Activated T-helper 1 cell treated with anti-CD3 and anti-CD28 coated beads, Interleukin-12 subunit alpha, Interleukin-12 subunit beta, Interleukin-2, Interleukin-4 antibody, amounts not matched to agents 30 ng/mL and 10 ng/mL and 1 ng/mL, durations not matched to agents 14 hours and 24 hours and 36 hours (primary cell): ENCODE measurements at regions of chr4 and their contacts with region 1.

Region 1: GRCh38 chr4:140153718-140154571 is at the start of gene MAML3:
- DNase-seq: peak; percentile 76
- H3K4me3 Mint-ChIP-seq: peak within 1 kb of the TSS; percentile 86
- H3K27ac Mint-ChIP-seq: peak within 1 kb of the TSS; percentile 63
- H3K4me1 Mint-ChIP-seq: peaks cover 57% of the 10 kb centered on the region
- H3K27me3 Mint-ChIP-seq: peaks cover 69% of the 10 kb centered on the region
- total RNA-seq, gene MAML3: 0.32 and 0.47 TPM in 2 replicates

Region 2: DNA sequence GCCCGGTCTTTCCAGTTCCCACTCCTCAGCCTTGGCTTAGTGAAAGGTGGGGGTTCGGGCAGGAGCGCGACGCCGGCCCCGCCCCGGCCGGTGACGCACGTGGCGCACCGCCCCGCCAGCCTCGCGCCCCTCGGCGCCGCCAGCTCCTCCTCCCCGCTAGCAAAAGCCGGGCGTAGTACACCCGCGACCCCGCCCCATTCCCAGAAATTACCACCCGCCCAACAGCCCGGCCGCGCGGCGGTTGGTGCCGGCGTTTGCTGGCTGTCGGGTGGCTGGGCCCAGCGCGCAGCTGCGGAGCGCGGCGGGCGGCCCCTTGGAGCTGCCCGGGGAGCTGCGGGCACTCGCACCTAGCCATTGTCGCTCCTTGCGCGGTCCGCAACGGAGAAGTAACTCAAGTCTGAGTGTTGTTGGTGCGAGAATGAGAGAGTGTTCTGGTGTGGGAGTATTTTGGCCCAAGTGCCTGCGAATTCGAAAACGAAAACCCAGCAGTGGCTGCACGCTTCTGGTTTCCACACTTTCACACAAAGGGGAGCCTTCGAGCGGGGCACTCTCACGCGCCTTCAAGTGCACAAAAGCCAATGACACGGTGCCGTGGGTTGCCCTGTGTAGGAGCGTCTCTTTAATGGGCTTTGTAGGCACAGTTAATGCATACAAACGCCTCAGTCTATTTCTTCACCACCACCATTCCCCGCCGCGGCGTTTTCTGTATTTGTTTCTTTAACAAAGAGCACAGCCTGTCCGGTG is 975.9 kb before region 1 on chr4:
- intact Hi-C with region 1: loop called (anchors 2 kb)
- DNase-seq: peak; percentile 97
- H3K4me3 Mint-ChIP-seq: peak overlapping the region; percentile 86
- H3K27ac Mint-ChIP-seq: peak overlapping the region; percentile 91
- H3K4me1 Mint-ChIP-seq: peaks cover 36% of the 10 kb centered on the region
- H3K27me3 Mint-ChIP-seq: peaks cover 50% of the 10 kb centered on the region

Region 3: GRCh38 chr4:139656614-139657486 is 497.1 kb before region 1 on chr4:
- intact Hi-C with region 1: loop called (anchors 2 kb)
- DNase-seq: peak; percentile 42
- H3K4me3 Mint-ChIP-seq: peak overlapping the region; percentile 73
- H3K27ac Mint-ChIP-seq: peak overlapping the region; percentile 94
- H3K4me1 Mint-ChIP-seq: peaks cover 45% of the 10 kb centered on the region
- H3K27me3 Mint-ChIP-seq: no peaks in the 10 kb centered on the region

Region 4: GRCh38 chr4:140012688-140013486 is 141.1 kb before region 1 on chr4:
- intact Hi-C with region 1: loop called (anchors 2 kb)
- DNase-seq: peak; percentile 42
- H3K4me3 Mint-ChIP-seq: no peak overlapping the region
- H3K27ac Mint-ChIP-seq: no peak overlapping the region
- H3K4me1 Mint-ChIP-seq: peaks cover 10% of the 10 kb centered on the region
- H3K27me3 Mint-ChIP-seq: peaks cover 40% of the 10 kb centered on the region

Region 5: GRCh38 chr4:140103676-140104075 is 50.3 kb before region 1 on chr4:
- intact Hi-C with region 1: loop called (anchors 1 kb)
- DNase-seq: peak; percentile 54
- H3K4me3 Mint-ChIP-seq: peak overlapping the region; percentile 39
- H3K27ac Mint-ChIP-seq: peak overlapping the region; percentile 75
- H3K4me1 Mint-ChIP-seq: peaks cover 72% of the 10 kb centered on the region
- H3K27me3 Mint-ChIP-seq: peaks cover 19% of the 10 kb centered on the region

Region 6: GRCh38 chr4:140373328-140374129 is 219.6 kb after region 1 on chr4 and contains the start of gene SCOC:
- intact Hi-C with region 1: loop called (anchors 1 kb)
- DNase-seq: peak; percentile 97
- H3K4me3 Mint-ChIP-seq: no peak within 1 kb of the TSS
- H3K27ac Mint-ChIP-seq: peak within 1 kb of the TSS; percentile 32
- H3K4me1 Mint-ChIP-seq: peaks cover 23% of the 10 kb centered on the region
- H3K27me3 Mint-ChIP-seq: no peaks in the 10 kb centered on the region
- total RNA-seq, gene SCOC: 33.9 and 34.0 TPM in 2 replicates